ENCODE measurements at regions of chr5 and their contacts with region 1.

Region 1: GRCh38 chr5:34486160-34486848 is 169.8 kb upstream of the RAI14 start:
- DNase-seq: peak; percentile 89
- H3K4me3 ChIP-seq: no peak overlapping the region
- H3K27ac ChIP-seq: peak overlapping the region; percentile 61 to 76 (median 73)
- H3K4me1 ChIP-seq: peaks cover 0 to 35% (median 26%) of the 10 kb centered on the region in 4 donors
- H3K27me3 ChIP-seq: no peaks in the 10 kb centered on the region
- CTCF ChIP-seq: peak; percentile 54 to 88 (median 84)
- EP300 ChIP-seq: no peak
- POLR2A ChIP-seq: no peak

Region 2: DNA sequence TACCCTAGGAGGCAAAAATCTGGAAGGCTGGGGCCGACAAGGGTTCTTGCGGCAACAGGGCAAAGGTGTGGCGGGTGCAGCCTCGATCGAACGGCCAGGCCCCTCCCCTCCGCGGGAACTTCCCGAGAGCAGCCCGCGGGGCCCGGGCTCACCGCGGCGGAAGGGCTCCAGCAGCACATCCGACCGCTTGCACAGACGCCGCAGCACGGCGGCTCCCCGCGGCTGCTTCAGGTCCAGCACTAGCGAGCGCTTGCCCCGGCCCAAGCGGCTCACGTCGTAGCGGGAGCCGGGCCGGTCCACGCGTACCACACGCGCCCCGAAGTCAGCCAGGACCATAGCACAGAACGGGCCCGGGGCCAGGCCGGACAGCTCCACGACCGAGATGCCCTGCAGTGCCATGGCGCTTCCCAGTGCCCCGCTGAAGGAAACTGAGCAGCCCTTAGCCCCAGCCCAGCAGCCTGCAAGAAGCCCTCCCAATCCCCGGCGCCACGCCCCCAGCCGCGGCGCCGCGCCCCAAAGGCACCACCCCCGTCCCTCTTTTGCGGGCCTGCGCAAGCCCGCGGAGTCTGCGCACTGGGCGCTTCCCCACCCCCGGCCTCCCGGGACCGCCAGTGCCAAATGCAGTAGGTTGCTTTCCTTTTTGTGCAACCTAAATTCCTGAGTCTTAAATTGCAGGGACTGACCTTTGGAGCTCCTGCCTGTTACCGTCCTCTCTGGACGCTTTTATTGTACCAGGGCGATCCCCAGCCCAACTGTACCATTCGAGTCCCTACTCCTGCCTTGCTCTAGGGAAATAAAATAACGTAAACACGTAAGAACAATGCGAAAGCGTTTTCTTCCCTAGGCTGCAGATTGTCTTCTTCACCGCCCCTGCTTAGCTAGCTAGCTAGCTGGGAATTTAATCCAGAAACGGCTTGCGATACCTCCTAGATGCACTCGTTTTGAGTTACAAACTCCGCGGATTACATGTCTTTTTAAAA is 478.4 kb before region 1 on chr5 and contains the start of gene AMACR:
- intact Hi-C with region 1: loop called (anchors 10 kb)
- DNase-seq: peak; percentile 97
- H3K4me3 ChIP-seq: peak within 1 kb of the TSS; percentile 60 to 73 (median 69)
- H3K27ac ChIP-seq: peak within 1 kb of the TSS; percentile 90 to 94 (median 92)
- H3K4me1 ChIP-seq: peaks cover 0 to 20% (median 12%) of the 10 kb centered on the region in 4 donors
- H3K27me3 ChIP-seq: no peaks in the 10 kb centered on the region
- CTCF ChIP-seq: no peak
- EP300 ChIP-seq: no peak
- POLR2A ChIP-seq: peak; percentile 78
- total RNA-seq, gene AMACR: 5.3 to 11.4 (median 9.3) TPM

Region 3: GRCh38 chr5:34522599-34523386 is 36.5 kb after region 1 on chr5:
- intact Hi-C with region 1: loop called (anchors 1 kb)
- DNase-seq: peak; percentile 88
- H3K4me3 ChIP-seq: no peak overlapping the region
- H3K27ac ChIP-seq: peak overlapping the region; percentile 10 to 80 (median 68)
- H3K4me1 ChIP-seq: peaks cover 0 to 28% (median 23%) of the 10 kb centered on the region in 4 donors
- H3K27me3 ChIP-seq: no peaks in the 10 kb centered on the region
- CTCF ChIP-seq: peak; percentile 36 to 72 (median 70)
- EP300 ChIP-seq: no peak
- POLR2A ChIP-seq: no peak

Region 4: GRCh38 chr5:34587355-34588241 is 101.3 kb after region 1 on chr5:
- intact Hi-C with region 1: no loop called
- DNase-seq: no peak
- H3K4me3 ChIP-seq: no peak overlapping the region
- H3K27ac ChIP-seq: no peak overlapping the region
- H3K4me1 ChIP-seq: peaks cover 0 to 7% (median 0%) of the 10 kb centered on the region in 4 donors
- H3K27me3 ChIP-seq: no peaks in the 10 kb centered on the region
- CTCF ChIP-seq: no peak
- EP300 ChIP-seq: no peak
- POLR2A ChIP-seq: no peak

Region 5: DNA sequence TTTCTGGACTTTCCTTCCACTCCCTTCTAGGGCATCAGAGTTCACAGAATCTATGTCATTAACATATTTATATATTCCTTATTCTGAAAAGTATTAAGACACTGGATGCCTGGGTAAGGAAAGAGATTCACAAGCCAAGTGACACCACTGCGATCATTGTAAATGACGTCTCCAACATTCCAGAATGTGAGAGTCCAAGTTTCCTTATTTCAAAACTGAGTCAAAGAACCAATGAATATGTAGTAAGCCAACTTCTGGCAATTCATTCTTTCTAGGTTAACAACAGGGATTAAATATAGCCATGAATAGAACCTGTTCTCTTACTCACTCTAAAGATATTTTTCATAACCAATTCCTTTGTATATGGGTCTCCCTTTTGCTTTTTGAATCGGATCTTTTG is 187.9 kb after region 1 on chr5:
- intact Hi-C with region 1: no loop called
- DNase-seq: no peak
- H3K4me3 ChIP-seq: no peak overlapping the region
- H3K27ac ChIP-seq: peak overlapping the region; percentile 67 to 83 (median 76)
- H3K4me1 ChIP-seq: peaks cover 0 to 48% (median 35%) of the 10 kb centered on the region in 4 donors
- H3K27me3 ChIP-seq: no peaks in the 10 kb centered on the region
- CTCF ChIP-seq: no peak
- EP300 ChIP-seq: peak in 2 of 4 donors; percentile 47 to 53
- POLR2A ChIP-seq: no peak

Region 6: GRCh38 chr5:34838785-34839714 is 352.7 kb after region 1 on chr5 and contains the start of gene TTC23L:
- intact Hi-C with region 1: loop called (anchors 5 kb)
- DNase-seq: peak; percentile 93
- H3K4me3 ChIP-seq: peak within 1 kb of the TSS; percentile 53 to 89 (median 76)
- H3K27ac ChIP-seq: peak within 1 kb of the TSS; percentile 66 to 73 (median 70)
- H3K4me1 ChIP-seq: peaks cover 0 to 11% (median 0%) of the 10 kb centered on the region in 4 donors
- H3K27me3 ChIP-seq: no peaks in the 10 kb centered on the region
- CTCF ChIP-seq: no peak
- EP300 ChIP-seq: no peak
- POLR2A ChIP-seq: peak in 1 of 2 donors; percentile 44
- total RNA-seq, gene TTC23L: 0.16 to 0.36 (median 0.28) TPM in 3 of 4 donors, not detected in the other

Region 7: DNA sequence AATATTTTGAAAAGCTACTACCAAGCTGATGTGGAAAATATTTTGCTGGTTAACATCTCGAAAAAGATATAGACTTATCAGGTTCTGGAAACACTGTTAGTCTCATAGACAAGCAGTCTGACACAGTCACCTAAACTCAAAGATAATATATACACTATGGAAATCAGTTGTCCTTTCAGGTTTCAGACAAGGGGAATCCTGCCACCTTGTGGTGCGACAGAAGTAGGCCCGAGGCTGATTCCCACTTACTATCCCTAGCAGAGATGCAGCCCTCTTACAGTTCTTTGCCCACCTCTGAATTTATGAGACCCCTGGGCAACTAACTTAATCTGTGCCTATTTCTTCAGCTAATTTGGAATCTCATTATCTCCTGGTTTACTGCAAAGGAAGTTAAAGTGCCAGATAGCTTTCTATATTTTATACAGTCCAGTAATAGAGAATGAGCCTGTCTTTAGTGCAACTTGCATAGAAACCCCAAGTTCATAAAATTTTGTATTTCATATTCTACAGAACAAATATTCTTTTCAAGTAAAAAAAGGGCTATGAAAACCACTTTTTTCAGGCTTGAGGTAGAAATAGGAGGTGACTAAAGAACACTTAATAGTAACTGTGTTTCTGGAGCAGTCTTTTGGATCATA is 412.1 kb after region 1 on chr5:
- intact Hi-C with region 1: loop called (anchors 1 kb)
- DNase-seq: peak; percentile 75
- H3K4me3 ChIP-seq: no peak overlapping the region
- H3K27ac ChIP-seq: no peak overlapping the region
- H3K4me1 ChIP-seq: peaks cover 0 to 4% (median 0%) of the 10 kb centered on the region in 4 donors
- H3K27me3 ChIP-seq: no peaks in the 10 kb centered on the region
- CTCF ChIP-seq: peak in 3 of 4 experiments; percentile 79 to 82 (median 80)
- EP300 ChIP-seq: no peak
- POLR2A ChIP-seq: no peak